Calu3 (cell line): ENCODE measurements at regions of chr5 and their contacts with region 1.

Region 1: DNA sequence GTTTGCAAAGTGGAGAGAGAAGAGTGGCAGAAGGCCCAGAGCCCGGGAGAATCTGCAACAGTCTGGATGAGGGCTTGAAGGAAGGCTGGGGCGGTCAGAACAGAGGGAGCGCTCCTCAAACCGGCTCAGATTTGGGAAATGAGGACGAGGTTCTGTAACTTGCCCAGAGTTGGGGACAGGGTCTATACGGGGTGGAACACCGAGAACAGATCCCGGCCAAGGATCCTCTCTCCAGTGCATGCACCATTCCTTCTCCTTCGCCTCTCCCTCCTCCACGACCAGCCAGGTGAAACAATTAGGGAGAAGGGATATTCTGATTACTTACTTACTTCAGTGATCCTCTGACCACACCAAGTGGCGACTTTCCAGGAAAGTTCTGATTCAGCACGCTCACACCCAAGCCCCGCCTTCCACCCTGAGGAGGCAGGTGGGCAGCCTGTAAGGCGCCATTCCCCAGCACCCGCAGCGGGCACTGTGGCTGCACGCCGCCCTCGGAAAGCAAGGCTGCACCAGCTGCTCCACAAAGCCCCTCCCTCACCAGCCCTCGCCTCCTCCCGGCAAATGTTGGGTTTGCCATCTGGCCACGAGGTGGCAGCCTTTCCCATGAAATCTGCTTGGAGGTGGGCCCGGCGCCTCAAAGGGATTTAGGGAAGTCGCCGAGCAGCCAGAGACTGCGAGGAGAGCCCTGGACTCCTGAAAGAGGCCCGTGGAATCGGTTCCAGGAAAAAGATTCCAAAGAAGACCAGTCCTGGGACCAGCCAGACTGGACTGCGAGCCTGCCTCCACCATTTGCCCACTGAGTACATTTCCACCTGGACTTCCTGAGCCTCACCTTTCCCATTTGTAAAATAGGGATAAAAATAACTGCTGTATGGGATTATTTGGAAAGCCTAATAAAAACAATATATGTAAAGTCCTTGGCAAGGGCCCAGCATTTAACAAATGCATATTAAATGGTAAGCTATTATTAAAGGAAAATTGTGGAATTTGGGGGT is 22.2 kb upstream of the WWC1 start:
- DNase-seq: peak; percentile 97
- H3K4me3 Mint-ChIP-seq: peak overlapping the region; percentile 12
- H3K27ac Mint-ChIP-seq: peak overlapping the region; percentile 5
- H3K4me1 Mint-ChIP-seq: peaks cover 43% of the 10 kb centered on the region
- H3K27me3 Mint-ChIP-seq: no peaks in the 10 kb centered on the region
- CTCF ChIP-seq: peak; percentile 94

Region 2: GRCh38 chr5:167853421-167853820 is 415.8 kb before region 1 on chr5:
- CTCF ChIA-PET with region 1: no interaction called
- intact Hi-C with region 1: no loop called
- DNase-seq: no peak
- H3K4me3 Mint-ChIP-seq: no peak overlapping the region
- H3K27ac Mint-ChIP-seq: no peak overlapping the region
- H3K4me1 Mint-ChIP-seq: no peaks in the 10 kb centered on the region
- H3K27me3 Mint-ChIP-seq: peaks cover 43% of the 10 kb centered on the region
- CTCF ChIP-seq: no peak

Region 3: DNA sequence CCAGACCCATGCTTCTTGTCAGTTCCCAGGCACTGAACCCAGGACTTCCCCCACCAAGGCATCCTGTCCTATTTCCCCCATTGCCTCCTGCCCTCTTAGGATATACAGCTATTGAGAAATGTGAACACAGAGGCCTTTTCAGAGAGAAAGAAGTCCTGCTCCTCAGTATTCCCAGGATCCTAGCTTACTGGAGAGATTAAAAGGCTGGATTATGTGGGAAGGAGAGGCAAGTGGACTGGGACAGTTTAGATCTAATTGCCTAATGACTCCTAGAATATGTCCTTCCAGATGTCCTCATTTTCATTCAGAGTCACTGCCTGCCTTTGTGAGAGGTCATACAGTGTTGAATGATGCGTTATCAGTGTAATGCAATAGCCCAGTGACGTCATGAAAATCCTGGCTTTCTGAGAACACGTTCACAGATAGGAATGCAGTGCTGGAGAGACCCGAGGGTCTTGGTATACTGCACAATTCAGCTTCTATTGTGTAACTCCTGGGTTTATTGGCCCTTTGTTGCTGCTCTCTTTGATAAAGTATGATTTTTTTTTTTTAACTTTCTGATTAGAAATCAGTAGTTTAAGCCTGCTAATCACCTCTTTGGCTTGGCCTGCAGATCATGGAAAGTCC is 48.4 kb after region 1 on chr5:
- CTCF ChIA-PET with region 1: interaction called, 8 read pairs
- intact Hi-C with region 1: loop called (anchors 2 kb)
- DNase-seq: peak; percentile 77
- H3K4me3 Mint-ChIP-seq: peak overlapping the region; percentile 66
- H3K27ac Mint-ChIP-seq: peak overlapping the region; percentile 82
- H3K4me1 Mint-ChIP-seq: peaks cover 79% of the 10 kb centered on the region
- H3K27me3 Mint-ChIP-seq: no peaks in the 10 kb centered on the region
- CTCF ChIP-seq: no peak

Region 4: GRCh38 chr5:168346441-168346840 is 77.2 kb after region 1 on chr5:
- CTCF ChIA-PET with region 1: interaction called, 10 read pairs
- intact Hi-C with region 1: no loop called
- DNase-seq: peak; percentile 84
- H3K4me3 Mint-ChIP-seq: peak overlapping the region; percentile 53
- H3K27ac Mint-ChIP-seq: peak overlapping the region; percentile 85
- H3K4me1 Mint-ChIP-seq: peaks cover 91% of the 10 kb centered on the region
- H3K27me3 Mint-ChIP-seq: no peaks in the 10 kb centered on the region
- CTCF ChIP-seq: no peak

Region 5: DNA sequence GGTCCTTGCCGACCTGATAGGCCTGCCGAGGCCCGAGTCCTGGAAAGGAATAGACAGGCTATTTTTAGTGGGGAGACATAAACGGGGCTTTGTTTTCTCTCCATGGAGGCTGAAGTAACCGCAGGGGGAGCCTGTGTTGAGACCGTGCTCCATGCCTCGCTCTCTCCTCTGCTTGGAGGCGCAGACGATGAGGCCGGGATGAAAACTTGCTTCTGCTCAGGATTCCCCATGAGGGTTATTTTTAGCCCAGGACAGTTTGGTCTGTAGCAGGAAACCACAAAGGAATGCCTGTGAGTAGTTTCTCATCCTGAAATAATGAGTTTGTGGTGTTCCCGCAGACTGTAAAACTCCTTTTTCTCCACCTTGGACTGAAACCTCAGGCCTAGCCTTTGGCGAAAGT is 135.1 kb after region 1 on chr5:
- CTCF ChIA-PET with region 1: interaction called, 14 read pairs
- intact Hi-C with region 1: loop called (anchors 1 kb)
- DNase-seq: no peak
- H3K4me3 Mint-ChIP-seq: no peak overlapping the region
- H3K27ac Mint-ChIP-seq: no peak overlapping the region
- H3K4me1 Mint-ChIP-seq: peaks cover 45% of the 10 kb centered on the region
- H3K27me3 Mint-ChIP-seq: no peaks in the 10 kb centered on the region
- CTCF ChIP-seq: no peak

Region 6: GRCh38 chr5:168486136-168486879 is 217.1 kb after region 1 on chr5 and contains the start of gene RARS1:
- CTCF ChIA-PET with region 1: no interaction called
- intact Hi-C with region 1: loop called (anchors 2 kb)
- DNase-seq: peak; percentile 97
- H3K4me3 Mint-ChIP-seq: peak within 1 kb of the TSS; percentile 100
- H3K27ac Mint-ChIP-seq: peak within 1 kb of the TSS; percentile 95
- H3K4me1 Mint-ChIP-seq: peaks cover 25% of the 10 kb centered on the region
- H3K27me3 Mint-ChIP-seq: no peaks in the 10 kb centered on the region
- CTCF ChIP-seq: peak; percentile 98
- total RNA-seq, gene RARS1: 130 and 137 TPM in 2 replicates